T-cell (primary cell): ENCODE measurements at regions of chr6 and their contacts with region 1.

Region 1: GRCh38 chr6:3489027-3489757 is 32.3 kb upstream of the SLC22A23 start:
- DNase-seq: no peak
- ATAC-seq: no peak
- H3K4me3 ChIP-seq: no peak overlapping the region
- H3K4me3 Mint-ChIP-seq: no peak overlapping the region
- H3K27ac ChIP-seq: no peak overlapping the region
- H3K27ac Mint-ChIP-seq: no peak overlapping the region
- H3K4me1 ChIP-seq: no peaks in the 10 kb centered on the region
- H3K4me1 Mint-ChIP-seq: no peaks in the 10 kb centered on the region
- H3K27me3 ChIP-seq: peaks cover 0 to 42% of the 10 kb centered on the region in 2 experiments
- H3K27me3 Mint-ChIP-seq: peaks cover 25 to 43% of the 10 kb centered on the region in 2 donors

Region 2: DNA sequence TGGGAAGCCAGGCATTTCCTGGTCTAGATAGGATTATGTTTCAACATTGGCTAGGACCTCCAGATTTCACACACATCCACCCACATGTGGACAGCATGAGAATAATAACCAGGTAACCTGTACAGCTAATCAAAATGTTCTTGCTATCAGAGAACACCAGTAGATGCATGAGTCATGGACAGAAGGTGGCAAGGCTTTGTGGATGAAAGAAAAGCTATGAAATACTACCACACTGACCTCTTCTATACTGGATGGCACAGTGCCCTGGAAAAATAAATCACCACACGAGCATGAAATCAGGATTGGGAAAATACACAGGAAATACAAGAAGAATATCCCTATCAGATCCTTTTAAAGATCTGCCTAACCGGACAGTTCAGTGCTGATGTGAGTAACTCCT is 1356.8 kb before region 1 on chr6:
- CTCF ChIA-PET with region 1: no interaction called
- POLR2A ChIA-PET with region 1: no interaction called
- DNase-seq: no peak
- ATAC-seq: no peak
- H3K4me3 ChIP-seq: no peak overlapping the region
- H3K4me3 Mint-ChIP-seq: no peak overlapping the region
- H3K27ac ChIP-seq: no peak overlapping the region
- H3K27ac Mint-ChIP-seq: no peak overlapping the region
- H3K4me1 ChIP-seq: peaks cover 0 to 6% of the 10 kb centered on the region in 2 experiments
- H3K4me1 Mint-ChIP-seq: peaks cover 26 to 38% (median 27%) of the 10 kb centered on the region in 3 donors
- H3K27me3 ChIP-seq: no peaks in the 10 kb centered on the region
- H3K27me3 Mint-ChIP-seq: no peaks in the 10 kb centered on the region

Region 3: GRCh38 chr6:3538536-3538935 is 49.3 kb after region 1 on chr6:
- CTCF ChIA-PET with region 1: no interaction called
- POLR2A ChIA-PET with region 1: interaction called in 1 of 2 experiments, 10 read pairs
- DNase-seq: no peak
- ATAC-seq: no peak
- H3K4me3 ChIP-seq: no peak overlapping the region
- H3K4me3 Mint-ChIP-seq: no peak overlapping the region
- H3K27ac ChIP-seq: no peak overlapping the region
- H3K27ac Mint-ChIP-seq: no peak overlapping the region
- H3K4me1 ChIP-seq: no peaks in the 10 kb centered on the region
- H3K4me1 Mint-ChIP-seq: no peaks in the 10 kb centered on the region
- H3K27me3 ChIP-seq: peaks cover 0 to 5% of the 10 kb centered on the region in 2 experiments
- H3K27me3 Mint-ChIP-seq: peaks cover 6 to 10% of the 10 kb centered on the region in 2 donors